ENCODE measurements at regions of chr1 and their contacts with region 1.

Region 1: GRCh38 chr1:3423245-3423829 is 31.1 kb upstream of the ARHGEF16 start:
- DNase-seq: no peak
- ATAC-seq: no peak
- H3K4me3 ChIP-seq: no peak overlapping the region
- H3K27ac ChIP-seq: no peak overlapping the region
- H3K4me1 ChIP-seq: peaks cover 3% of the 10 kb centered on the region; the same call in 1 of the 3 replicates
- CTCF ChIP-seq: no peak
- EP300 ChIP-seq: no peak
- POLR2A ChIP-seq: no peak
- RAD21 ChIP-seq: no peak

Region 2: DNA sequence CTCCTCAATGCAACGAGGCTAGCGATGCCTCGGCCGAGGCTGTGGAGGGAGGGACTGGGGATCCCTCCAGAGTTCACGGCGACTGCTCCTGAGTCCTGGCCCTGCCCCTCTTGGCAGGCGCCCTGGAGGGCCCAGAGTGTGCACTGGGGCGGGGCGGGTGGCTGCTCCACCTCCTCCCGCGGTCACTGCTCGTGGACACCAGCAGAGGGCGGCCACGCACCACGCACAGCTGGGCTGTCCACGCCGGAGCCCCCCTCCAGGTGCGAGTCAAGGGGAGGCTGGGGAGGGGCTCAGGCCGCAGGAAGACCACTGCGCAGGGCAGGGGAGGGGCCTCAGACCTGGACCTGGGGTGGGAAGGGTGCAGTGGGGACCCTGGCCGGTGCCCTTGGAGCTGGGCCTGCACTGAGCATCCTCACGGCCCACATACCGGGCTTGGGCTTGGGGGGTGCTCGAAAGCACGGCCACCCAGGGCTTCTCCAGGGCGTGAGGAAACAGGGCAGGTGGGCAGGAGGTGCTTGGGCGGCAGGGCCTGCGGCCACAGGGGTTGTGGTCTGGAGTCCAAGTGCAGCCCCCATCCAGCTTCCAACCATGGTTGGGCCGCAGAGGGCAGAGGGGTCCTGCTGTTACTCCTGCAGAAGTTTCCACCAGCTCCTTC is 601.2 kb before region 1 on chr1:
- CTCF ChIA-PET with region 1: interaction called, 17 read pairs
- POLR2A ChIA-PET with region 1: no interaction called
- DNase-seq: peak; percentile 17 to 38
- ATAC-seq: peak; percentile 74 to 93; a peak in 5 of 6 replicates
- H3K4me3 ChIP-seq: no peak overlapping the region
- H3K27ac ChIP-seq: no peak overlapping the region
- H3K4me1 ChIP-seq: no peaks in the 10 kb centered on the region
- CTCF ChIP-seq: peak; percentile 46
- EP300 ChIP-seq: no peak
- POLR2A ChIP-seq: no peak
- RAD21 ChIP-seq: peak; percentile 62 to 65

Region 3: GRCh38 chr1:3012456-3013291 is 410.7 kb before region 1 on chr1:
- CTCF ChIA-PET with region 1: interaction called, 24 read pairs
- POLR2A ChIA-PET with region 1: no interaction called
- DNase-seq: peak in 1 of 2 experiments; percentile 66
- ATAC-seq: peak; percentile 70 to 87; a peak in 4 of 6 replicates
- H3K4me3 ChIP-seq: no peak overlapping the region
- H3K27ac ChIP-seq: no peak overlapping the region
- H3K4me1 ChIP-seq: no peaks in the 10 kb centered on the region
- CTCF ChIP-seq: peak; percentile 58
- EP300 ChIP-seq: no peak
- POLR2A ChIP-seq: no peak
- RAD21 ChIP-seq: peak; percentile 57 to 81